Psoas muscle (tissue), 8 donors: ENCODE measurements at regions of chr3 and their contacts with region 1.

Region 1: GRCh38 chr3:134388788-134389485 is 14.7 kb upstream of the AMOTL2 start:
- DNase-seq: no peak
- ATAC-seq: no peak
- H3K4me3 ChIP-seq: no peak overlapping the region
- H3K27ac ChIP-seq: no peak overlapping the region
- H3K4me1 ChIP-seq: no peaks in the 10 kb centered on the region
- H3K27me3 ChIP-seq: peaks cover 0 to 4% (median 0%) of the 10 kb centered on the region in 3 donors
- CTCF ChIP-seq: no peak

Region 2: DNA sequence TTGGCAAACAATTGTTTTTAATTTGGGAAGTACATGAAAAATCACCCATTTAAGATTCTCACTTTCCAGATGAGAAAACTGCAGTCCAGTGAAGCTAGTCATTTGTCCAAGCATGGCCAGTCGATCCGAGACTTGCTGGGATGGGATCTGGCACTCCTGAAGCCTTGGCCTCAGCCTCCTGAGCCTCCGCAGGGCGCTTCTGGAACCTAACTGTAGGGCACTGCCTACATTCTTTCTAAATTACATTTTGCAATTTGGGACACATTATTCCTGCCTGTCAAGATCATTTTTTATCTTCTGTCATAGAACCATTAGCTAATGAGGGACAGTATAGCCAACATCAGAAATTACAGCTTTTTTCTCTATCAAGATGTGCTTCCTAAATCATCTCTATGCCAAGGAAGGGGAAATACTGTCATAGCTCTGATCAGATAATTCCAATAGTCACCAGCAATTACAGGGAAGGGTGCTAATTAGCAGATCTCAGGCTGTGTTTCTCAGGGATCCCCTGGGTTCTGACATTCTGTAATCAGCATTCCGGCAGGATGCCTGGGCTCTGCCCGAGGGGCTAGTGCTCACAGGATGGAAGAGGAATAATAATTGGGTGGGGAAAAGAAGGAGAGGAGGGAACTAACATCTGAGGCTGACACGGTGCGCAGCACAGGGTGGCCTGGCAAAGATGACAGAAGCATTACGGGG is 68.6 kb after region 1 on chr3:
- intact Hi-C with region 1: loop called in 1 of 2 experiments (anchors 5 kb)
- DNase-seq: no peak
- ATAC-seq: no peak
- H3K4me3 ChIP-seq: no peak overlapping the region
- H3K27ac ChIP-seq: no peak overlapping the region
- H3K4me1 ChIP-seq: peaks cover 5% of the 10 kb centered on the region
- H3K27me3 ChIP-seq: no peaks in the 10 kb centered on the region
- CTCF ChIP-seq: no peak